ENCODE measurements at regions of chr12 and their contacts with region 1.

Region 1: GRCh38 chr12:56565510-56566101 is 44.0 kb downstream of the RBMS2 start:
- DNase-seq: peak; percentile 80 to 91 (median 91)
- ATAC-seq: peak; percentile 91 to 97 (median 95)
- H3K4me3 ChIP-seq: peak overlapping the region in 4 of 12 donors; percentile 4 to 21 (median 9)
- H3K27ac ChIP-seq: peak overlapping the region; percentile 49 to 93 (median 84)
- H3K4me1 ChIP-seq: peaks cover 4 to 59% (median 38%) of the 10 kb centered on the region in 12 donors
- H3K27me3 ChIP-seq: no peaks in the 10 kb centered on the region
- CTCF ChIP-seq: peak in 6 of 12 donors; percentile 9 to 31 (median 18)
- POLR2A ChIP-seq: peak in 1 of 2 donors; percentile 39

Region 2: DNA sequence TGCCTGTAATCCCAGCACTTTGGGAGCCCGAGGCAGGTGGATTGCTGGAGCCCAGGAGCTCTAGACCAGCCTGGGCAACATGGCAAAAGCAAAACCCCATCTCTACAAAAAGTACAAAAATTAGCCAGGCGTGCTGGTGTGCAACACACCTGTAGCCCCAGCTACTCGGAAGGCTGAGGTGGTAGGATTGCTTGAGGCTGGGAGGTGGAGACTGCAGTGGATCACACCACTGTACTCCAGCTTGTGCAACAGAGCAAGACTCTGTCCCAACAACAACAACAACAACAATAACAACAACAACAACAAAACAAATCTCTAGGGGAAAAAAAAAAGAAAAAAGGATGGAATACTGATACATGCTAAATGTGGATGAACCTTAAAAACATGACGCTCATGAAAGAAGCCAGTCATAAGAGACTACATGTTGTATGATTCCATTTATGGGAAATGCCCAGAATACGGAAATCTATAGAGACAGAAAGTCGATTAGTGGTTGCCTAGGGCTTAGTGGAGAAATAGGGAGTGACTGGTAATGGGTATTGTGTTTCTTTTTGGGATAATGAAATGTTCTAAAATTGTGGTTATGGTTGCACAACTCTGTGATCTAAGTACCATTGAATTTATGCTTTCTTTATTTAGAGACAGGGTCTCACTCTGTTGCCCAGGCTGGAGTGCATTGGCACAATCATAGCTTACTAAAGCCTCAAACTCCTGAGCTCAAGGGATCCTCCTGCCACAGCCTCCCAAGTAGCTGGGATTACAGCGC is 36.1 kb before region 1 on chr12:
- intact Hi-C with region 1: loop called in 2 of 10 experiments (anchors 2 to 5 kb)
- DNase-seq: no peak
- ATAC-seq: no peak
- H3K4me3 ChIP-seq: no peak overlapping the region
- H3K27ac ChIP-seq: peak overlapping the region in 1 of 12 donors; percentile 15
- H3K4me1 ChIP-seq: peaks cover 0 to 60% (median 33%) of the 10 kb centered on the region in 12 donors
- H3K27me3 ChIP-seq: no peaks in the 10 kb centered on the region
- CTCF ChIP-seq: no peak
- POLR2A ChIP-seq: no peak